ENCODE measurements at regions of chrX and their contacts with region 1.

Region 1: DNA sequence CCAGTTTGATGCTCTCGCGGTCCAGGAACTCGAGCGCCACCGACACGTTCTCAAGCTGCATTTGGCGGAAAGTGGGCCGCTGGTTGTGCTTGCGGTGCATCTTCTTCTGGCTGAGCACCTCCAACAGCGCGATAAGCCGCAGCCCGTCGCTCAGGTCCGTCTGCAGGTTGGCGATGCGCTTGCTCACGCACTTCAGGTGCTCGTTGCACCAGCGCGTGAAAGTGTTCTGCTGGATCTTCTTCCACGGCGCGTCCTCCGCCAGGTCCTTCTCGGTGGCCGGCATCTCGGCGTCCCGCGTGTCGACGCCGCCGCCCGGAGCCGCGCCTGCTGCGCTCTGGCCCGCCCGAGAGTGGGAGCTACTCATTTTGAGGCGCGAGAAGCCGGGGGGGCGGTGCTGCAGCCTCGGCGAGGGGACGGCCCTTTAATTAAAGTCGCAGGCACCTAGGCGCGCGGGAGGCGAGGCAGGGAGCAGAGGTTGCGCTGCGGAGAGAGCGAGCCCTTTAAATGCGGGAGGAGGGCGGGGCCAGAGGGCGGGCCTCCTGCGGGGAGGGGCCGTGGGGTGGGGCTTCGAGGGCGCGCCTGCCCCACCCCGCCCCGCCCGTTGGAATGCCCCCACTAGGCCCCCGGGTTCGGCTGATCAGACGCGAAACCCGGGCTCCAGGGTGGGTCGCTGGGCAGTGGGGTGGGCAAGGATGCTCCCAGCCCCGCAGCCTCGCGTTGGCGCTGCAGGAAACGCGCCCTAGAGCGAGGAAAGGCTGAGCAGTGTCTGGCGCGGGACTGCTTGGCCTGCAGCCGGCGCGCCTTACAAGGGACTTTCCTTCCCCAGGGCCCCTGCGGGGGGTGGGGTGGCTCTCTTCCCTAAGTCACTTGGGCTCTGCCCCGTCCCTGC is 3.3 kb downstream of the FLNA start:
- DNase-seq: peak; percentile 85 to 96 (median 89)
- H3K4me3 ChIP-seq: peak overlapping the region; percentile 94
- H3K4me3 Mint-ChIP-seq: peak overlapping the region; percentile 82 to 97 (median 86)
- H3K27ac ChIP-seq: peak overlapping the region; percentile 99
- H3K27ac Mint-ChIP-seq: peak overlapping the region; percentile 73 to 100 (median 82)
- H3K4me1 ChIP-seq: peaks cover 48% of the 10 kb centered on the region
- H3K4me1 Mint-ChIP-seq: peaks cover 34 to 39% (median 36%) of the 10 kb centered on the region in 3 donors
- H3K27me3 ChIP-seq: no peaks in the 10 kb centered on the region
- H3K27me3 Mint-ChIP-seq: peaks cover 0 to 8% of the 10 kb centered on the region in 2 donors

Region 2: GRCh38 chrX:154384284-154384892 is 13.3 kb after region 1 on chrX:
- CTCF ChIA-PET with region 1: interaction called, 11 read pairs
- POLR2A ChIA-PET with region 1: interaction called, 22 read pairs
- DNase-seq: no peak
- H3K4me3 ChIP-seq: no peak overlapping the region
- H3K4me3 Mint-ChIP-seq: peak overlapping the region in 2 of 7 donors; percentile 48 to 79
- H3K27ac ChIP-seq: no peak overlapping the region
- H3K27ac Mint-ChIP-seq: peak overlapping the region in 3 of 8 donors; percentile 66 to 99 (median 72)
- H3K4me1 ChIP-seq: peaks cover 12% of the 10 kb centered on the region
- H3K4me1 Mint-ChIP-seq: peaks cover 4 to 17% (median 13%) of the 10 kb centered on the region in 3 donors
- H3K27me3 ChIP-seq: no peaks in the 10 kb centered on the region
- H3K27me3 Mint-ChIP-seq: peaks cover 0 to 4% of the 10 kb centered on the region in 2 donors

Region 3: GRCh38 chrX:154411322-154411980 is 40.3 kb after region 1 on chrX and contains the start of gene TAFAZZIN:
- CTCF ChIA-PET with region 1: no interaction called
- POLR2A ChIA-PET with region 1: no interaction called
- DNase-seq: peak; percentile 59 to 83 (median 70)
- H3K4me3 ChIP-seq: peak within 1 kb of the TSS; percentile 59
- H3K4me3 Mint-ChIP-seq: peak within 1 kb of the TSS; percentile 85 to 98 (median 89)
- H3K27ac ChIP-seq: peak within 1 kb of the TSS; percentile 59
- H3K27ac Mint-ChIP-seq: peak within 1 kb of the TSS; percentile 80 to 99 (median 92)
- H3K4me1 ChIP-seq: peaks cover 9% of the 10 kb centered on the region
- H3K4me1 Mint-ChIP-seq: peaks cover 7 to 23% (median 10%) of the 10 kb centered on the region in 3 donors
- H3K27me3 ChIP-seq: no peaks in the 10 kb centered on the region
- H3K27me3 Mint-ChIP-seq: peaks cover 0 to 5% of the 10 kb centered on the region in 2 donors
- total RNA-seq, gene TAFAZZIN: 51.9 to 52.3 TPM